ENCODE measurements at regions of chr3 and their contacts with region 1.

Region 1: GRCh38 chr3:194583604-194584318 is 49.5 kb downstream of the TMEM44 start:
- DNase-seq: peak; percentile 93 to 98 (median 96)
- H3K4me3 ChIP-seq: peak overlapping the region; percentile 96
- H3K27ac ChIP-seq: peak overlapping the region; percentile 50 to 72
- H3K4me1 ChIP-seq: peaks cover 2% of the 10 kb centered on the region
- H3K27me3 ChIP-seq: no peaks in the 10 kb centered on the region
- CTCF ChIP-seq: peak in 2 of 3 donors; percentile 15 to 18
- EP300 ChIP-seq: no peak
- POLR2A ChIP-seq: peak; percentile 91

Region 2: DNA sequence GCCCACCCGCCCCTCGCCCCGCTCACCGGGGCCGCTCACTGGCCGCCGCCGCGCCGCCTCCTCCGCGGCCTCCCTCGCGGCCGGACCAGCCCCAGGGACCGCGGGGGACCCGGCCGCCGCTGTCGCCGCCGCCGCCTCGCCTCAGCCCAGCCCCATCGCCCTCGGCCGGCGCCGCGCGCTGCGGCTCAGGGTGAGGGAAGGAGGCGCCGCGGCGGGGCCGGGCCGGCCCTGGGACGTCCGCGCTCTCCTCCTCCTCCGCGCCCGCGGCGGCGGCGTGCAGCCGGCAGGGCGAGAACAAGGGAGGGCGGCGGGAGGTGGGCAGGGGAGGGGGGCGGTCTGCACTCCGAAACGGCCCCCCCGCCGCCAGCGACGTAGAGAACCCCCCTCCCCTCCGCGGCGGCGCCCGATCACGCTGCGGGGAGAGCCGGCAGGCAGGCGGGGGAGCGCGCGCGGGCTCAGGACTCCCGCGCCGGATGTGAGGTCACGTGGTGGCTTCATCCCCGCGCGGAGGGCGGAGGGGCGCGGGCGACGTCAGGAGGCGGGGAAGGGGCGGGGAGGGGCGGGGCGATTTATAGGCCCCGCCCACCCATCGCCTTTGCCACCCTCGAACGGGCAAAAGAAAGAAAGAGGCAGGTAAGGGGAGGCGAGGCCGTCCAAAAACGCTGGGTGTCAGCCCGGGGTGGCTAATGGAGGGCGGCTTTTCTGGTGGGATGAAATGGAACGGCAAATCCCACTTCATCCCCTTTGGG is 97.0 kb before region 1 on chr3 and contains the start of gene ATP13A3:
- intact Hi-C with region 1: loop called in 2 of 4 experiments (anchors 5 kb)
- DNase-seq: peak; percentile 86 to 93 (median 91)
- H3K4me3 ChIP-seq: peak within 1 kb of the TSS; percentile 88
- H3K27ac ChIP-seq: peak within 1 kb of the TSS; percentile 73 to 77
- H3K4me1 ChIP-seq: peaks cover 10% of the 10 kb centered on the region
- H3K27me3 ChIP-seq: no peaks in the 10 kb centered on the region
- CTCF ChIP-seq: no peak
- EP300 ChIP-seq: no peak
- POLR2A ChIP-seq: peak; percentile 78
- total RNA-seq, gene ATP13A3: 41.5 to 101 (median 53.4) TPM

Region 3: GRCh38 chr3:195187609-195188425 is 604.1 kb after region 1 on chr3:
- intact Hi-C with region 1: no loop called
- DNase-seq: no peak
- H3K4me3 ChIP-seq: no peak overlapping the region
- H3K27ac ChIP-seq: no peak overlapping the region
- H3K4me1 ChIP-seq: peaks cover 4% of the 10 kb centered on the region
- H3K27me3 ChIP-seq: no peaks in the 10 kb centered on the region
- CTCF ChIP-seq: no peak
- EP300 ChIP-seq: no peak
- POLR2A ChIP-seq: no peak

Measured in ovary (tissue), 10 donors.